PC-9 (cell line): ENCODE measurements at regions of chr16 and their contacts with region 1.

Region 1: DNA sequence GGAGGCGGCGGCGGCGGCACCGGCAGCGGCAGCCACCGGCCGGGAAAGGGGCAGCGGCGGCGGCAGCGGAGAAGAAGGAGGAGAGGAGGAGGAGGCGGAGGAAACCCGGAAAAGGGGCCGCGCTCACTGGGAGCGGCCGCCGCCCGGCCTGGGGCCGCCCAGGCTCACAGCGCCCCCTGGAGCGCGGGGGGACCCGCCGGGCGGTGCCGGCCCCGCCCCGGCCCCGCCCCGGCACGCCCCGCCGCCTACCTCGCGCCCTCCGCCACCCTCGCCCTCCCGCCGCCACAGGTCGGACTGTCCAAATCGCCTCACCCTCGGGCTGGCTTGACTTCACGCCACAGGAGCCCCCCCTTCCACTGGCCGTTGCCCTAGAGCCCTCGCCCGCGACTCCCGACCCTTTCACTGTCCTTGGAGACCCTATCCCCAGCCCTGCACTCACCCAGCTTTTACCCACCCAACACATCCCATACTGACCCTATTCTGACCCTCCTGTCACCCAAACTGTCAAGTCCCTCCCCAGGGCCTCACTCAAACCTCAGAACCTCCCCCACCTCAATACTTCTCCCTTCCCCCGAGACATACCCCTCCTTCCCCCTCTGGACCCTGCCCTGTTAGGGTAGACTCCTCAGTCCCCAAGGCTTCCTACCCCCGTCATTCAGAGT is at the start of gene CSNK2A2:
- DNase-seq: peak in 1 of 2 experiments; percentile 64
- H3K4me3 ChIP-seq: peak within 1 kb of the TSS; percentile 80
- H3K27ac ChIP-seq: no peak within 1 kb of the TSS
- H3K4me1 ChIP-seq: peaks cover 26% of the 10 kb centered on the region
- H3K27me3 ChIP-seq: no peaks in the 10 kb centered on the region
- CTCF ChIP-seq: no peak; the same call in 1 of the 2 replicates
- total RNA-seq, gene CSNK2A2: 100 and 104 TPM in 2 replicates

Region 2: DNA sequence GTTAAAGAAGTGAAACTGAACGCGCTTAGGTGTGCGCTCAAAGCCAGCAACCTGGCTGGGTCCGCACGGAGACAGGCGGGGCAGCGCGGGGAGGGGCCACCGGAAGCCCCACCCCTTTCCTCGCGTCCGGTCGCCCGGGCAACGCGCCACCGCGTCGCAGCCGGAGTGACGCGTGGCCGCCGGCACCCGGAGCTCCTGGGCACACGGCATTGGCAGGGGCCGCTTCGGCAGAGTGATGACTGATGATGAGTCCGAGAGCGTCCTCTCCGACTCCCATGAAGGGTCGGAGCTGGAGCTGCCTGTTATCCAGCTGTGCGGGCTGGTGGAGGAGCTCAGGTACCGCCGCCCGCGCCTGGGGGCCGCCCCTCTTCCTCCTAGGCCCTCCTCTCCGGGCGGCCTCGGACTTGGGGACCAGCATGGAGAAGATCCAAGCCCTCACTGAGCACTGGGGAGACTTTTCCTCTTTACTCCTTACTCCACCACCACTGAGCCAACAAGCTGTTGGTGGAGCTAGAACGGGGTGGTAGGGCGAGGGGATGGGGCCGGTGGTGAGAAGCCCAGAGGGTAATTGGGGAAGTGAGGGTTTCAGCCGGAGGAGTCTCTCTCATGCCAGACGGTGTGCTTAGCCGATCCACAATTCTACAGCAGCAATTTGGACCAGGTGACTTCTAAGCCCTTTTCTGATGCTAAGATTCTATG is 51.8 kb after region 1 on chr16:
- CTCF ChIA-PET with region 1: interaction called, 4 read pairs
- POLR2A ChIA-PET with region 1: no interaction called
- intact Hi-C with region 1: loop called (anchors 1 kb)
- DNase-seq: peak; percentile 78 to 92
- H3K4me3 ChIP-seq: peak overlapping the region; percentile 82
- H3K27ac ChIP-seq: peak overlapping the region; percentile 57
- H3K4me1 ChIP-seq: peaks cover 11% of the 10 kb centered on the region
- H3K27me3 ChIP-seq: no peaks in the 10 kb centered on the region
- CTCF ChIP-seq: no peak

Region 3: DNA sequence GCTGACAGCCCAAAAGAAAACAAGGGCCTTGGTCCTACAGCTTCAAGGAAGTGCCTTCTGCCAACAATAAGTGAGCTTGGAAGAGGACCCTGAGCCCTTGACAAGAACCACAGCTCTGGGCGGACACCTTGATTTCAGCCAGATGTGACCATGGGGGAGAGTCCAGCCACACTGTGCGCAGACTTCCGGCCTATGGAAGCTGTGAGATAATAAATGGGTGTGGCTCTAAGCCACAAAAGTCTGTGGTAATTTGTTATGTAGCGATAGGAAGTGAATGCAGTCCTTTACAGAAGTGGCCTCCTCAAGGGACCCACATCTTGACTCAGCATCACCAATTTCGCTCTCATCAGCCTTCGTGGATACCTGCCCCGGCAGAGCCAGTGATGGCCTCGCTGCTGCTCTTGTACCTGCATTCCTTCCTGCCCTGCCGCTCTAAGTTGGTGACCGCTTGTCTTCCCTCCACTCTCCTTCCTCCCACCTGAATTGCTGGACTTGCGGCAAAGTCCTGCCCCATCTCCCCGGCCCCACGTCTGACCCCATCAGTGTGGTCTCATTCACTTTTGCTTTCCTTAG is 67.4 kb after region 1 on chr16:
- CTCF ChIA-PET with region 1: interaction called, 15 read pairs
- POLR2A ChIA-PET with region 1: no interaction called
- intact Hi-C with region 1: no loop called
- DNase-seq: no peak
- H3K4me3 ChIP-seq: no peak overlapping the region
- H3K27ac ChIP-seq: peak overlapping the region; percentile 46; the same call in 1 of the 2 replicates
- H3K4me1 ChIP-seq: peaks cover 16% of the 10 kb centered on the region
- H3K27me3 ChIP-seq: no peaks in the 10 kb centered on the region
- CTCF ChIP-seq: no peak

Region 4: DNA sequence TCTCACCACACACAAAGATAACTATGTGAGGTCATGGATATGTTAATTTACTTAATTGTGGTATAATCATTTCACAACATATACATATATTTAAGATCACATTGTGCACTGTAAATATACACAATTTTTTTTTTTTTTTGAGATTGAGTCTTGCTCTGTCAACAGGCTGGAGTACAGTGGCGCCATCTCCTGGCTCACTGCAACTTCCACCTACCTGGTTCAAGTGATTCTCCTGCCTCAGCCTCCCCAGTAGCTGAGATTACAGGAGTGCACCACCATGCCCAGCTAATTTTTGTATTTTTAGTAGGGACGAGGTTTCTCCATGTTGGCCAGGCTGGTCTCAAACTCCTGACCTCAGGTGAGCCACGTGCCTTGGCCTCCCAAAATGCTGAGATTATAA is 108.2 kb after region 1 on chr16:
- CTCF ChIA-PET with region 1: interaction called, 8 read pairs
- POLR2A ChIA-PET with region 1: no interaction called
- intact Hi-C with region 1: loop called (anchors 10 kb)
- DNase-seq: peak in 1 of 2 experiments; percentile 28
- H3K4me3 ChIP-seq: no peak overlapping the region
- H3K27ac ChIP-seq: no peak overlapping the region
- H3K4me1 ChIP-seq: no peaks in the 10 kb centered on the region
- H3K27me3 ChIP-seq: no peaks in the 10 kb centered on the region
- CTCF ChIP-seq: peak; percentile 62

Region 5: GRCh38 chr16:58317608-58318152 is 119.5 kb after region 1 on chr16:
- CTCF ChIA-PET with region 1: interaction called, 14 read pairs
- POLR2A ChIA-PET with region 1: no interaction called
- intact Hi-C with region 1: no loop called
- DNase-seq: no peak
- H3K4me3 ChIP-seq: no peak overlapping the region
- H3K27ac ChIP-seq: no peak overlapping the region
- H3K4me1 ChIP-seq: peaks cover 16% of the 10 kb centered on the region
- H3K27me3 ChIP-seq: no peaks in the 10 kb centered on the region
- CTCF ChIP-seq: no peak